ENCODE measurements at regions of chr17 and their contacts with region 1.

Region 1: DNA sequence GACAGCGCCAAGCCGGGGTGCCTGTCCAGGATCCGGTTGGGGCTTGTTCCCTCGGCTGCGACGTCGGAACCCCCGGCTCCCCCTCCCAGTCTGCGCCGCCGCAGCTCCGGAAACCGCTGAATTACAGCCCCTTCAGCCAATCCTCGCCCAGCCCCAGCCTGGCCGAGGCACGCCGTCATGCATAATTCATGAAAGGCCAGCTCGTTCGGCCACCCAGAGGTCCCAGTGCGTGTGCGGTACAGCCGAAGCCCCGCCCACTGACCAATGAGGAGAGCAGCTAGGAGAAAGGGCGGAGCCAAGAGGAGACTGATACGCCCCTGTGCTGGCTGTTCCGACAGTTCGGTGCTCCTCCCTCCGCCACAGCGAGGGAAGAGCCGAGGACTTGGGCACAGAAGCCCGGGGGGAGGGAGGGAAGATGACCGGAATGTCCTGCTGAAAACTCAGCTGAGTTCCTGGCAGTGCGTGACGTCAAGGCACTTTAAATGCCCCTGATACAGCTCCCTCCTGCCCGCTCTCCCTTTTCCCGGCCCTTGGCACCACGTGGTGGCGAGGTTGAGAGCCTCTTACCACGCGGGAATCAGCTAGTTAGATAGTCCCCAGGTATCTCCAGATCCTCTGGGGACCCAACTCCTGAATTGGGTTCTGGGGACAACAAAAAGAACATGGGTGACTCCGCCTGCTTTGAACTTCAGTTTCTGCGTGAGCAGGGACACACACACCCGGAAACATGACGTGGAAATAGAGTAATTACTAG is at the start of gene STAT3:
- DNase-seq: peak; percentile 99 to 100
- ATAC-seq: peak; percentile 94 to 98
- H3K4me3 ChIP-seq: peak within 1 kb of the TSS; percentile 88
- H3K27ac ChIP-seq: peak within 1 kb of the TSS; percentile 94 to 96
- H3K4me1 ChIP-seq: peaks cover 28% of the 10 kb centered on the region
- CTCF ChIP-seq: 0 out of 3 replicates have a peak, but pooled peaks have one; percentile 12
- EP300 ChIP-seq: peak; percentile 48 to 80; a peak in 3 of 5 replicates
- POLR2A ChIP-seq: peak; percentile 81
- RAD21 ChIP-seq: peak; percentile 29 to 56; a peak in 3 of 5 replicates
- polyA plus RNA-seq, gene STAT3: 72.8 and 81.9 TPM in 2 replicates

Region 2: GRCh38 chr17:42329025-42329976 is 59.3 kb before region 1 on chr17:
- CTCF ChIA-PET with region 1: interaction called, 1,360 read pairs
- POLR2A ChIA-PET with region 1: interaction called, 16 read pairs
- DNase-seq: peak; percentile 95 to 98
- ATAC-seq: peak; percentile 75 to 79
- H3K4me3 ChIP-seq: peak overlapping the region; percentile 9; the same call in 1 of the 3 replicates
- H3K27ac ChIP-seq: peak overlapping the region; percentile 86 to 89
- H3K4me1 ChIP-seq: peaks cover 57% of the 10 kb centered on the region
- CTCF ChIP-seq: no peak
- EP300 ChIP-seq: peak in 1 of 2 experiments; percentile 50; a peak in 2 of 5 replicates
- POLR2A ChIP-seq: no peak
- RAD21 ChIP-seq: peak in 1 of 2 experiments; percentile 14; a peak in 2 of 5 replicates

Region 3: DNA sequence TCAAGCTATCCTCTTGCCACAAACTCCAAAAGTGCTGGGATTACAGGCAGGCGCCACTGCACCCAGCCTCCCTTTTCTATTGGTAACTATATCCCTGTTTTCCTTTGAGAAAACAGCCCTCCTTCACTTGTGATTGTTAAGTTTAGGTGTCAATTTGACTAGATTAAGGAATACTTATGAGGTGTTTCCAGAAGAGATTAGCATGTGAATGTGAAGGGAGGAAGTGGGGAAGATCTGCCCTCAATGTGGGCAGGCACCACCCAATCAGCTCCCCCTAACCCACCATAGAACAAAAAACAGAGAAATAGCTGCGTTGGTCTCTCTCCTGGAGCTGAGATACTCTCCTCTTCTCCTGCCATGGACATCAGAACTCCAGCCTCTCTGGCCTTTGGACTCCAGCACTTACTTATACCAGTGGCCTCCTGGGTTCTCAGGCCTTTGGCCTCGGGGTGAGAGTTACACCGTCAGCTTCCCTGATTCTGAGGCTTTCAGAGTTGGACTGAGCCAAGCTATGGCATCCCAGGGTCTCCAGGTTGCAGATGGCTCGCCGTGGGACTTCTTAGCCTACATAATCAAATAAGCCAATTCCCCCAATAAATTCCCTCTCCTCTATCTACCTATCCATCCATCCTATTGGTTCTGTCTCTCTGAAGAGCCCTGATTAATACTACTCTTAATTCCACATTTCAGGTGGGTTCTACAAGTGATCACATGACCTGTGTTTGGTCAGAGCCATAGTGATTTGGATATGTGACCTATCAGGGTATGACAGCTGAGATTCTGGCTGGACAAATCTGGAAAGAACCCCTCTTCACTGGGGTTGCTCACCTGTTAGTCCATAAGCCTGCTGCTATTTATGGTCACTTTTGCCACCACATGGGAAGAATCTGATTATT is 11.6 kb after region 1 on chr17:
- CTCF ChIA-PET with region 1: interaction called, 189 read pairs
- POLR2A ChIA-PET with region 1: interaction called, 7 read pairs
- DNase-seq: no peak
- ATAC-seq: no peak; a peak in 1 of 6 replicates
- H3K4me3 ChIP-seq: no peak overlapping the region
- H3K27ac ChIP-seq: peak overlapping the region; percentile 1 to 44; a peak in 3 of 6 replicates
- H3K4me1 ChIP-seq: peaks cover 51% of the 10 kb centered on the region
- CTCF ChIP-seq: no peak
- EP300 ChIP-seq: no peak
- POLR2A ChIP-seq: no peak
- RAD21 ChIP-seq: no peak

Measured in A549 (cell line).